ACHN (cell line): ENCODE measurements at regions of chr17 and their contacts with region 1.

Region 1: GRCh38 chr17:27332485-27333409 is 38.8 kb downstream of the WSB1 start:
- DNase-seq: peak; percentile 98

Region 2: GRCh38 chr17:27245230-27245696 is 87.5 kb before region 1 on chr17:
- in situ Hi-C with region 1: loop called (anchors 25 kb)
- DNase-seq: peak; percentile 63

Region 3: DNA sequence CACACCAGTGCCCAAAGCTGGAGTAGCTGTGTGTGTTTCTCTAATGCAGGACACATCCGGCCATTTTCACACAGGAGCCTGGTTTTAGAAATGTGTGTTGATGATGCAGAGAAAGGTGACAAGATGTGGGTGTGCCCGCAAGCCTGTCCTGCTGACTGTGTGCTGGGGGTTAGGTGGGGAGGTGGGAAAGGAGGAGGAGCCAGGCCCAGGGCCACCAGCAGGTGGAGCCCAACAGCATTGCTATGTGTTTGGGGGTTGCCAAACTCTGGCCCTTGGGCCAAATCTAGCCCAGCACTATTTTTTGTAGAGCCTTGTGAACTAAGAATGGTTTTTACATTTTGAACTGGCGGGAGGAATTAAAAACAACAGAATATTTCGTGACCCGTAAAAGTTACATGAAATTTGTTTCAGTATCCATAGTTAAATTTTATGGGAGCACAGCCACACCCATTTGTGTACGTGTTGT is 236.5 kb after region 1 on chr17:
- in situ Hi-C with region 1: loop called (anchors 25 kb)
- DNase-seq: peak; percentile 39